ENCODE measurements at regions of chr2 and their contacts with region 1.

Region 1: GRCh38 chr2:64914735-64915509 is 74.3 kb upstream of the SLC1A4 start:
- DNase-seq: no peak
- H3K4me3 ChIP-seq: no peak overlapping the region
- CTCF ChIP-seq: no peak

Region 2: DNA sequence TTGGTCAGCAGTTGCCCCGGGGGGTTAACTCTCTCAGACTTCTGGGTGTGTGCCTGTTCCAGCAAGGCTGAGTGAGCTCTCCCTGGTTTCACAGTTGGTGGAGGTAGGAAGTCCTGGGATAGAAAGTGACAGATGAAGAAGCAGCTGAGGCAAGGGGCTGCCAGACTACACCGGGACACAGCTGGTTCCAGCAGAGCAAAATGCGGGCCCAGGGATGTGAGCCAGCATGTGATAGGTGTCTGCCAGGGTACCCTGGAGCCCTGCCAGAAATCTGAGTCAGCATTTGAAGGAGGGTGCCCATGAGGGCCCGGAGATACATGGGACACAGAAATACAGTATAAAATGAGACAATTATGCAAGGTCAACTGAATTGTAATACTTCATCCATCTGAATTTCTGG is 540.2 kb before region 1 on chr2:
- CTCF ChIA-PET with region 1: no interaction called
- POLR2A ChIA-PET with region 1: no interaction called
- DNase-seq: no peak
- H3K4me3 ChIP-seq: no peak overlapping the region
- CTCF ChIP-seq: no peak

Region 3: DNA sequence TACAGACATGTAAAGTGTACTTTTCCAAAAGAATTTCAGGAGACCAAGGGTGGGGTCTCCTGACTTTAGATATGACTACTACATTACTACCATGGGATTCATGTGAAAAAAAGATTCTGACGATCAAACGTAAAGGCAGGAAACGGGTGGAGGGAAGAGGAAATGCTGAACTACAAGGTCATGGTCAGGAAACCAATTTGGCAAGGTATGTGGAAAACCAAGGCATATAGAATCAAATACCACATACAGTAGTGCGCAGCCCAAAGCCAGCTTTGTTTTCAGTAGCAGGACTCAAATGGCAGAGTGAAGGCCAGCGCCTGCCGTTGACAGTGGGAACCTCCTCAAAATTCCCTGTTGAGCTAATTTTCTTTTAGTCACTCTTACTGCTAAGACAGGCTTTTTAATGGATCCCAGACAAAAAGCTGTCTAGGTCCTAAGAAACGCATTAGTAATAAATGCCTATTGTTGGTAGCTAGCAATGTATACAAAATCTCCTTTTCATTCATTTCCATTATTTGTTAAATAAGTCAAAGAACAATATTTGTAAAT is 203.6 kb before region 1 on chr2:
- CTCF ChIA-PET with region 1: no interaction called
- POLR2A ChIA-PET with region 1: no interaction called
- DNase-seq: no peak
- H3K4me3 ChIP-seq: no peak overlapping the region
- CTCF ChIP-seq: no peak

Region 4: DNA sequence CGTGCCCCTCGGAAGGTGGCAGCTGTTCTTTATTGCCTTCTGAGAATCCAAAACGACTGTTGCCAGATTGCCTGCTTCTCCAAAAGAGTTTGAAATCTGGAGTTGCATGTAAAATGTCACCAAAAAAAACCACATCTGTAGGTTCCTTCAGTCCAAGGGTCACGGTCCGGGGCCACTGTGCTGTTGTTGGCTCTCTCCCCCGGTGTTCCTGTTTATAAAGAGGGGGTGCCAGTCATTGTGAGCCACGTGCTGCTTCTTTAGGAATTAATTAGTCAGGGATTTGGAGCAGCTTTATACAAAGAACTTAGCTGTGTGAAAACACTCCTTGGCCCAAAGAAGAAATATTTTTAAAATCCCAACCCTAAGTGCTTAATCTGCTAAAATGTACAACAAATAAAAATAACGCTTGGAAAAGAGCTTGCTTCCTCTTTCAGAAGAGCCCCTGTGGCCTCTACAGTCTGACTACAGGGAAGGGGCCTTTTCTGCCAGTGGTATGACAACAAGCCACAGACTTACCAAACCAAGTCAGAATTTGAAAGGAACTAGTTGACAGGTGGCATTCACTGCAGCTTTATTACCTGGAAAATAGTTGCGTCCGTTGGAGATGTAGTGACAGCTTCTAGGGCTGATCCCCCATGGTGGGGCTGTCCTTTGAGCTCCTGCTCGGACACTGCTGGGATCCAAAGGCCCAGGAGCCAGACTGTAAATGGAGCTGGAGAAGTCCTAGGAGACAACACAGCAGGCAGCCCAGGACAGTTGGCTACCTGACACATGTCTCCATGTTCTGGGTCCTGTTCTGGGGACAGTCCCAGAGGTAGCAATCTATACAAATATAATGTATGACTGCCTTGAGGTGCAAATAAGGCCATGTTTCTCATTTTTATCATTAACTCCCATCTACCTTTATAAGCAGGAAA is 10.3 kb before region 1 on chr2:
- CTCF ChIA-PET with region 1: interaction called, 40 read pairs
- POLR2A ChIA-PET with region 1: no interaction called
- DNase-seq: no peak
- H3K4me3 ChIP-seq: no peak overlapping the region
- CTCF ChIP-seq: no peak

Region 5: DNA sequence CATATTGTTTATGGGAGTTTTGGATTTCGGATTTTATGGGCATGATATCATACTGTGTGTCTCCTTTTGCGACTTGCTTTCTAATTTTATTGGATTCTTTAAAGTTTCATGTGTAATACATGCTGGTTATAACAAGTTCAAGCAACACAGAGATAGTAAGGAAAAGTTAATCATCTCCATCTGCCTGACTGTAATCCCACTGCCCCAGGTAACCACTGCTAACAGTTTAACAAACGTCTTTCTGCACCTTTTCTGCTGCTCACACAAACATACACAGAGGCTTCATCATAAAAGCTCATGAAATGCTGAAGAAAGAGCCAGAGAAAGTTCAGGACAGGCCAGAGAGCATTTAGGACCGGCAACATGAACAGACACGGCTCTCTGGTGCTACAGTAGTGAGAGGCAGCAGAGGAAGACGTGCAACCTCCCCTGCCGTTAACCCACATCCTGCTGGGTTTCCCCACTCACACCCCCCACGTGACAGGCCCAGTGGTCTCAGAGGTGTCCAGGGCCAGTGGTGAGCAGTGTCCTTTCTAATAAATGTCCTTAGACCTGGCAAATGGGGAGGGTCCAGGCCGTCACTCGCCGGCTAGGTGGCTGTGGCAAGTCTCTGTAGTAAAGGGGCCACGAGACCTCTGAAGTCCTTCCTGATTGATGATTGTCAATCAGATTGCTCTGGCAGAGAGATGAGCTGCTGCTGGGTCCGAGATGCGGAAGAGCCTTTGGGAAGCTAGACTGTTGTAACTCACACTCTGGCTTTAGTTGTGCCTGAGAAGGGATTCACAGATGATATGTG is 31.2 kb after region 1 on chr2:
- CTCF ChIA-PET with region 1: interaction called, 15 read pairs
- POLR2A ChIA-PET with region 1: no interaction called
- DNase-seq: no peak
- H3K4me3 ChIP-seq: no peak overlapping the region
- CTCF ChIP-seq: no peak

Region 6: GRCh38 chr2:65040400-65041261 is 125.7 kb after region 1 on chr2:
- CTCF ChIA-PET with region 1: interaction called, 331 read pairs
- POLR2A ChIA-PET with region 1: no interaction called
- DNase-seq: no peak
- H3K4me3 ChIP-seq: peak overlapping the region; percentile 7
- CTCF ChIP-seq: peak; percentile 93

Region 7: GRCh38 chr2:65186872-65187851 is 272.2 kb after region 1 on chr2:
- CTCF ChIA-PET with region 1: interaction called, 25 read pairs
- POLR2A ChIA-PET with region 1: no interaction called
- DNase-seq: peak; percentile 34
- H3K4me3 ChIP-seq: no peak overlapping the region
- CTCF ChIP-seq: peak; percentile 81

Region 8: DNA sequence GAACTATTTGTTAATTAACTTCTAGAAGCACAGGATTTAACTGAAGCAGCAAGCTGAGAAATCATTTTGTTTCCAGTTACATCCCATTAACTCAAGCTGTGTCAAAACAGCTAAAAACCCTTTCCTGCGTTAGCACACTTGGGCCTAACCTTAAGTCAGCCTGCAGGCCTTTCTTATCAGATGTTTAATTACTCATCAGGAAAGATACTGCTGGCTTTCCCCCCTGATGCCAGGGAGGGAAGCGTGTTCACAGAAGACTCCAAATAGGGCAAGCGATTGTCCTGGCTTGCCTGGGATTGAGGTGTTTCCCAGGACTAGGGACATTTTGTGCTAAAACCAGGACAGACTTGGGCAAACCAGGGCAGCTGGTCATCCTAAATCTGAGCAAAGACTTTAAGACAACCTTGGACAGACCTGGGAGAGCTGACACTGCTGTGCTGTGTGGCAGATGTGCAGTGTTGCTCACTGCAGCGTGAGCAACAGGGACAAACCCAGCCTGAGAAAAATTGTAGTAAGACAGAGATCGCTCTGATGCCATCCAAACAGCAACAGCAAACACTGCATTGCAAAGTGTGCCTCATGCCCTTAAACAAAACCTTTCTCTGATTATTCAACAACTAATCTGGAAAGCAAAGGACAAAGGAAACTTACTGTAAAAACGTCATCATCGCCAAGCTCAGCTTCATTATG is 416.6 kb after region 1 on chr2:
- CTCF ChIA-PET with region 1: no interaction called
- POLR2A ChIA-PET with region 1: no interaction called
- DNase-seq: no peak
- H3K4me3 ChIP-seq: no peak overlapping the region
- CTCF ChIP-seq: no peak